Activated T-helper 1 cell treated with anti-CD3 and anti-CD28 coated beads, Interleukin-12 subunit alpha, Interleukin-12 subunit beta, Interleukin-2, Interleukin-4 antibody, amounts not matched to agents 30 ng/mL and 10 ng/mL and 1 ng/mL, durations not matched to agents 14 hours and 24 hours and 36 hours (primary cell): ENCODE measurements at regions of chr7 and their contacts with region 1.

Region 1: GRCh38 chr7:84123965-84124547 is 70.5 kb downstream of the SEMA3A start:
- DNase-seq: no peak
- H3K4me3 Mint-ChIP-seq: no peak overlapping the region
- H3K27ac Mint-ChIP-seq: no peak overlapping the region
- H3K4me1 Mint-ChIP-seq: no peaks in the 10 kb centered on the region
- H3K27me3 Mint-ChIP-seq: no peaks in the 10 kb centered on the region

Region 2: GRCh38 chr7:84914598-84914997 is 790.5 kb after region 1 on chr7:
- intact Hi-C with region 1: loop called (anchors 5 kb)
- DNase-seq: no peak
- H3K4me3 Mint-ChIP-seq: no peak overlapping the region
- H3K27ac Mint-ChIP-seq: no peak overlapping the region
- H3K4me1 Mint-ChIP-seq: no peaks in the 10 kb centered on the region
- H3K27me3 Mint-ChIP-seq: no peaks in the 10 kb centered on the region